Calu3 (cell line): ENCODE measurements at regions of chr12 and their contacts with region 1.

Region 1: GRCh38 chr12:86264451-86265342 is 8.5 kb upstream of the MGAT4C start:
- DNase-seq: peak; percentile 79
- H3K4me3 Mint-ChIP-seq: peak overlapping the region; percentile 88
- H3K27ac Mint-ChIP-seq: peak overlapping the region; percentile 71
- H3K4me1 Mint-ChIP-seq: peaks cover 18% of the 10 kb centered on the region
- H3K27me3 Mint-ChIP-seq: no peaks in the 10 kb centered on the region
- CTCF ChIP-seq: no peak

Region 2: GRCh38 chr12:86513226-86513625 is 248.5 kb after region 1 on chr12:
- CTCF ChIA-PET with region 1: no interaction called
- intact Hi-C with region 1: loop called (anchors 10 kb)
- DNase-seq: no peak
- H3K4me3 Mint-ChIP-seq: no peak overlapping the region
- H3K27ac Mint-ChIP-seq: peak overlapping the region; percentile 30
- H3K4me1 Mint-ChIP-seq: peaks cover 18% of the 10 kb centered on the region
- H3K27me3 Mint-ChIP-seq: no peaks in the 10 kb centered on the region
- CTCF ChIP-seq: no peak

Region 3: DNA sequence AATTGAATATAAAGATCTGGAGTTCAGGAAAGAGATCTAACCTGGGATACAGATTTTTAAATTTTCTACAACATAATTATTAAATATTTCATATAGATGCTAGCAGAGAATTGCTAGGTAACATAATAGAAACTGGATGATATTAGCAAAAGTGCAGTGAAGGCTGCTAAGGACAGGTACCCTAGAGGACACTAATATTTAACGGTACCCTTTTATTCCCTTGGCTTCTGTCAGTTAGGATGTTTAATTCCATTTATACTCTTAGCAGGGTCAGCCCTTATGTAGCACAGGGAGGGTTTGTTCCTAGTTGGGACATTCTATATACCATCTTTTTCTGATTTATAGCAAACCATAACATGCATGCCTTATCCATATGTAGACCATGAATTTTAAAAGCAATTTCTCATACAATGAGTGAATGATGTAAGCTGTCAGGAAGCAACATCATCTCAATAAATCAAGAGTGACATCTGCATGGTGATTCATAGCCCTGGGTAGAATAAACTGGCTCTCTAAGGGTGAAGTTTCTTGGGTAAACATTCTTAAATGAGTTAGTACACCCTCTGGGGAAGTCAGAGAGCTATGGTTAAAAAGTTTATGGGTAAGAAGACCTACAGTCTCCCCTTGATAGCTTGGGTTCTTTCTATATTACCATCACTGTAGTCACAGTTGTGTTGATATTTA is 395.9 kb after region 1 on chr12:
- CTCF ChIA-PET with region 1: no interaction called
- intact Hi-C with region 1: loop called (anchors 10 kb)
- DNase-seq: no peak
- H3K4me3 Mint-ChIP-seq: no peak overlapping the region
- H3K27ac Mint-ChIP-seq: peak overlapping the region; percentile 33
- H3K4me1 Mint-ChIP-seq: peaks cover 32% of the 10 kb centered on the region
- H3K27me3 Mint-ChIP-seq: no peaks in the 10 kb centered on the region
- CTCF ChIP-seq: no peak

Region 4: DNA sequence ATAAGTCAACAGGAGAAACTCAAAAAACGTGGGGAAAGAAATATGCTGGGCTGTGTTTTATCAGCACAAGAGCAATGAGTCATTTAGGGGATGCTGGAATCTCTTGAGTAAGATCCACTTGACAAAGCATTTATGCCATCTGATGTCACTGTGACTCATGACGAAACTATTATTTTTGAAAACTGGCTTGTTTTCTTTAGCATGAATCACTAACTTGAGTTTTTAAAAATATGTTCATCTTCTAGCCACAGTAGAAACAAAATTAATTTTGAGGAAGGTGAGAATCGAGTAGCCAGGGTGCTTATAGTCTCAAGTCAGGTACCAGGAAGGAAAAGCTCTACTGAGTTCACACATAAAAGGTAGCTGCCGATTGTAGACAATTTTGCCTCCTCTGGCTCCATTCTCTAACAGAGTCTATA is 447.7 kb after region 1 on chr12:
- CTCF ChIA-PET with region 1: no interaction called
- intact Hi-C with region 1: loop called (anchors 5 kb)
- DNase-seq: peak; percentile 29
- H3K4me3 Mint-ChIP-seq: peak overlapping the region; percentile 53
- H3K27ac Mint-ChIP-seq: peak overlapping the region; percentile 89
- H3K4me1 Mint-ChIP-seq: peaks cover 11% of the 10 kb centered on the region
- H3K27me3 Mint-ChIP-seq: no peaks in the 10 kb centered on the region
- CTCF ChIP-seq: no peak

Region 5: DNA sequence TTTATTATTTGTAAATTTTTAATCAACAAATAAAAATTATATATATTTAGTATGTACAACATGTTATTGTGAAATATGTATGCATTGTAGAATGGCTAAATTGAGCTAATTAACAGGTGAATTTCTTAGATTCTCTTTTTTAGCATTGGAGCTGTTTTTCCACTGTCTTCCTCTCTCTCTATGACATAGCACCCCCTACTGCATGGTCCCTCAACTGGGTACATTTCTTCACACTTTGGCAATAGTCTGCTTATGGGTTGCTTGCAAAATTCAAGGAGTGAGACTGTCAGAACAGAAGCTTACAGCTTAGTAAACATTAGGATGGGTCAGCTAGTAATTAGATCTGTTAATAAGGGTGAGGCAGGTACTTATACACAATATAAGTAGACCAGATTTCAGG is 650.0 kb after region 1 on chr12:
- CTCF ChIA-PET with region 1: interaction called, 3 read pairs
- intact Hi-C with region 1: loop called (anchors 2 kb)
- DNase-seq: peak; percentile 56
- H3K4me3 Mint-ChIP-seq: no peak overlapping the region
- H3K27ac Mint-ChIP-seq: no peak overlapping the region
- H3K4me1 Mint-ChIP-seq: no peaks in the 10 kb centered on the region
- H3K27me3 Mint-ChIP-seq: no peaks in the 10 kb centered on the region
- CTCF ChIP-seq: peak; percentile 44